Right cardiac atrium (tissue), 5 donors: ENCODE measurements at regions of chr20 and their contacts with region 1.

Region 1: DNA sequence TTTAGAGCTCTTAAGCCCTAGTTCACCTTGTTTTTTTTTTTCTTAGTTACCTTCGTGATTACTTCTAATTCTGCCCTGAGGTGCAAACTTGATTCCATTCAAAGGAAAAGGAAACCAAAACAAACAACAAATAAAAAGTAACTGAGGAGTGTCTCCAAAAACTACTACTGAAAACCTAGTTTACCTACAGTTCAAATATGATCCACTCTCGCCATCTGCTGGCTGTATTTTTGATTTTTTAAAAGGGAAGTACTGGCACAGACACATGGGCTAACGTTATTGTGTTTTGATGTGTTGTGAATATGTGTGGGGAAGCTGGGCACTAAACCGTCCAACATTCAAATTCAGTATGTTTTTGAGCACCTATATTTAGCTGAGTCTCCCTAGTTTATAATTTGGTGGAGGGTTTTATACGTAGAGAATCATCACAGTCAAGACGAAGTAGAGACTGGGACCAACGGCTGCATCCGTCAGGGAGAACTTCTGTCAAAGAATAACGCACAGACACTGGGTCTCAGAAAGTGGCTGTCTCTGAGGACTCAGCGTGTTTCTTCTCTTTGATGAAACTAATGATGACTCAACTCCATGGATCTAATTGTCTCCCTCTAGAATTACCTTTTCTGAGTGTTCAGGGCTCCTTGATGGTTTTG is 373.5 kb upstream of the BTBD3 start:
- DNase-seq: no peak
- ATAC-seq: peak in 1 of 2 donors; percentile 65
- H3K4me3 ChIP-seq: no peak overlapping the region
- H3K27ac ChIP-seq: no peak overlapping the region
- H3K4me1 ChIP-seq: no peaks in the 10 kb centered on the region
- H3K27me3 ChIP-seq: no peaks in the 10 kb centered on the region

Region 2: GRCh38 chr20:9978397-9979004 is 1565.7 kb before region 1 on chr20:
- intact Hi-C with region 1: loop called in 2 of 4 experiments (anchors 10 kb)
- DNase-seq: peak in 1 of 3 donors; percentile 7
- ATAC-seq: peak; percentile 90 to 93
- H3K4me3 ChIP-seq: no peak overlapping the region
- H3K27ac ChIP-seq: no peak overlapping the region
- H3K4me1 ChIP-seq: no peaks in the 10 kb centered on the region
- H3K27me3 ChIP-seq: no peaks in the 10 kb centered on the region

Region 3: DNA sequence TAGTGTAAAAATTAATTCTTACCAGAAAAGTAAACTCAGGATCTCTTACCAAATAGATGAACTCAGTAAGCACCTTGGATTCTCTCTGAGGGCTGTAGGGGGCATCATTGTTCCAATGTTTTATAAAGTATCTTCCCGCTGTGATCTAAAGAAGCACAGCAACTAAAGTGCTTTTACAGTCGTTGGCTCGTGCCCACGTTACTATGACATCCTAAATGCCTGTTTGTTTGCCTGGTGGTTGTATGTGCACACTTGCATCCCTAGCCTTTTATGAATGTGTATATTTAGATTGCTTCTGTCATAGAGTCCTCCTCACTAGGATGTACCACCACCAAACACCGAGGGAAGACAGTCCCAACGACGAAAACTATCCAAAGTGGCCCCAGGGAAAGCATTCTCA is 1074.6 kb before region 1 on chr20:
- intact Hi-C with region 1: loop called in 2 of 4 experiments (anchors 5 to 10 kb)
- DNase-seq: peak in 2 of 3 donors; percentile 28 to 60
- ATAC-seq: peak; percentile 59 to 76
- H3K4me3 ChIP-seq: no peak overlapping the region
- H3K27ac ChIP-seq: no peak overlapping the region
- H3K4me1 ChIP-seq: peaks cover 2% of the 10 kb centered on the region
- H3K27me3 ChIP-seq: no peaks in the 10 kb centered on the region

Region 4: DNA sequence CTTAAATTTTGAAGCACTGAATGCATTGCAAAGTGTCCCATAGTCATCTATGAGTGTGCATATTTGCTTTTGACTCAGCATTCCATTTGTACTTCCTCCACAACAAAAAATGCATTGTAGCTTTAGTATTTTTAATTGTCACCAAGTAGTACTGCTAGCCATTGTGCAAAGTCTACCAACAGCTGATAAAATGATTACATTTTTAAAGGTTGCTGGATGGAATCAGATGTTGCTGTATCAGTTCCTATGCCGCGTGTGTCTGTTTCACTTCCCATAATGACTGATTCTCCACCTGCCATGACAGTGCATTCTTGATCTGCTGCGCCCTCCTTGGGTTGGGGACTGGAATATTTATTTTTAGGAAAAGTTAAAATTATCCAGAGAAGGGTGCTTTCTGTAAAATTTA is 1067.8 kb before region 1 on chr20:
- intact Hi-C with region 1: loop called in 1 of 4 experiments (anchors 10 kb)
- DNase-seq: no peak
- ATAC-seq: no peak
- H3K4me3 ChIP-seq: no peak overlapping the region
- H3K27ac ChIP-seq: no peak overlapping the region
- H3K4me1 ChIP-seq: peaks cover 5% of the 10 kb centered on the region
- H3K27me3 ChIP-seq: no peaks in the 10 kb centered on the region

Region 5: DNA sequence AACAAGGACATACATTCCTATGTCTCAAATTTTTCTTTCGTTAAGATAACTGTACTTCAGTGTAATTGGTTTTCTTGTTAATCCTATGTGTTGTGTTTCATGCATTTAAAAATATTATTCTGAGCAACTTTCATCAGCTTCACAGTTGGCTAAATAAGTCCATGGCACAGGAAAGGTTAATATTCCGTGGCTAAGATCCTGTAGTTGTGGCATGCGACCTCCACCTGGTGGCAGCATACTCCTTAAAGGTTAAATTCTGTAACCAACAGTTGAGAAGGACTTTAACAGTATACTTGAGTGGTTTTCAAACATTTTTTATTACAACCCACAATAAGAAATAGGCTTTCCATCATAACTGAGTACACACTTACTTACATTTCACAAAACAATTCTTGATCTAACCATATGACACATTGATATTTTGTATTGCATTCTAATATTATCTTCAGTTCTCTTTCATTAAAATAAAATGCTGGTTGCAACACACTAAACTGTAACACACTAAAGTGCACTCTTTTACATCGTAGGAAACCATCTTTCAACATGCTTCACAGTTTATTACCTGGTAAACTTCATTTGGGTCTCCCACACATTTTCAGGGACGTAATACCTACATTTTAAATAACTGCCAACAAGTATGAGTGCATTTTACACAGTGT is 990.7 kb before region 1 on chr20:
- intact Hi-C with region 1: loop called in 3 of 4 experiments (anchors 5 to 10 kb)
- DNase-seq: peak; percentile 69 to 91 (median 82)
- ATAC-seq: peak; percentile 72 to 81
- H3K4me3 ChIP-seq: no peak overlapping the region
- H3K27ac ChIP-seq: no peak overlapping the region
- H3K4me1 ChIP-seq: no peaks in the 10 kb centered on the region
- H3K27me3 ChIP-seq: no peaks in the 10 kb centered on the region